ENCODE measurements at regions of chr10 and their contacts with region 1.

Region 1: GRCh38 chr10:70596110-70596798 is 6.3 kb downstream of the PRF1 start:
- DNase-seq: peak in 1 of 2 experiments; percentile 27
- H3K4me3 ChIP-seq: no peak overlapping the region
- H3K27ac ChIP-seq: no peak overlapping the region
- H3K4me1 ChIP-seq: peaks cover 0 to 4% (median 0%) of the 10 kb centered on the region in 4 experiments; a peak in 3 of 7 replicates
- H3K27me3 ChIP-seq: peaks cover 0 to under 1% (median 0%) of the 10 kb centered on the region in 4 experiments; a peak in 1 of 7 replicates
- CTCF ChIP-seq: no peak
- EP300 ChIP-seq: no peak
- POLR2A ChIP-seq: no peak
- RAD21 ChIP-seq: no peak

Region 2: GRCh38 chr10:70584909-70585544 is 11.2 kb before region 1 on chr10:
- CTCF ChIA-PET with region 1: interaction called, 26 read pairs
- POLR2A ChIA-PET with region 1: no interaction called
- DNase-seq: peak; percentile 31 to 66
- H3K4me3 ChIP-seq: no peak overlapping the region
- H3K27ac ChIP-seq: no peak overlapping the region
- H3K4me1 ChIP-seq: peaks cover 0 to 6% (median 4%) of the 10 kb centered on the region in 4 experiments; a peak in 5 of 7 replicates
- H3K27me3 ChIP-seq: no peaks in the 10 kb centered on the region
- CTCF ChIP-seq: no peak
- EP300 ChIP-seq: no peak
- POLR2A ChIP-seq: no peak
- RAD21 ChIP-seq: peak in 1 of 2 experiments; percentile 6; a peak in 1 of 4 replicates